Common myeloid progenitor, CD34-positive (primary cell): ENCODE measurements at regions of chr15 and their contacts with region 1.

Region 1: DNA sequence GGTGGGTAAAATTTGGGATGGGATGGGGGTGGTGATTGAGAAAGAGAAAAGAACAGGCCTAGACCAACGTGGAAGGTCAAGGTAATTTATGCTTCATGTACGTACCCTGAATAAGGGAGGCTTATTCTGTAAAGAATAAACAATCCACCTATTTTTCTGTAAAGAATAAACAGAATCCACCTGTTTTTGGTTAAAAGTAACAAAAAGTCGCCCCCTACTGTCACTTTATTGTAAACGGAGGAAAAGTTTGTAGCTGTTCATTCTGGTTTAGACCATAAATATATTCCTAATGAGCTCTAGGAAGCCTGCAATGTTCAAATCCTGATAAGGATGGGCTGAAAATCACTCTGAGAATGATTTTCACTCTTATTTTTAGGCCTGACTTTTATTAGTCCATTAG is 23.5 kb upstream of the SQOR start:
- DNase-seq: peak in 2 of 3 donors; percentile 42 to 56
- H3K4me3 ChIP-seq: no peak overlapping the region
- H3K27ac ChIP-seq: no peak overlapping the region
- H3K4me1 ChIP-seq: no peaks in the 10 kb centered on the region
- H3K27me3 ChIP-seq: no peaks in the 10 kb centered on the region

Region 2: GRCh38 chr15:45587095-45587860 is 24.0 kb before region 1 on chr15 and contains the start of gene BLOC1S6:
- CTCF ChIA-PET with region 1: interaction called, 37 read pairs
- POLR2A ChIA-PET with region 1: no interaction called
- DNase-seq: peak; percentile 97 to 99 (median 98)
- H3K4me3 ChIP-seq: peak within 1 kb of the TSS; percentile 46 to 100 (median 88)
- H3K27ac ChIP-seq: peak within 1 kb of the TSS; percentile 93 to 98
- H3K4me1 ChIP-seq: peaks cover 17 to 40% (median 26%) of the 10 kb centered on the region in 4 experiments
- H3K27me3 ChIP-seq: peaks cover 0 to 6% (median 0%) of the 10 kb centered on the region in 5 experiments